Activated CD4-positive, alpha-beta T cell treated with anti-CD3 and anti-CD28 coated beads, Interleukin-2, amount 10 ng/mL, durations not matched to agents 24 days and 14 days (primary cell): ENCODE measurements at regions of chr5 and their contacts with region 1.

Region 1: GRCh38 chr5:79020861-79021561 is 35.9 kb upstream of the ARSB start:
- DNase-seq: peak; percentile 76
- H3K4me3 Mint-ChIP-seq: no peak overlapping the region
- H3K27ac Mint-ChIP-seq: no peak overlapping the region
- H3K4me1 Mint-ChIP-seq: peaks cover 11% of the 10 kb centered on the region
- H3K27me3 Mint-ChIP-seq: peaks cover 72% of the 10 kb centered on the region

Region 2: DNA sequence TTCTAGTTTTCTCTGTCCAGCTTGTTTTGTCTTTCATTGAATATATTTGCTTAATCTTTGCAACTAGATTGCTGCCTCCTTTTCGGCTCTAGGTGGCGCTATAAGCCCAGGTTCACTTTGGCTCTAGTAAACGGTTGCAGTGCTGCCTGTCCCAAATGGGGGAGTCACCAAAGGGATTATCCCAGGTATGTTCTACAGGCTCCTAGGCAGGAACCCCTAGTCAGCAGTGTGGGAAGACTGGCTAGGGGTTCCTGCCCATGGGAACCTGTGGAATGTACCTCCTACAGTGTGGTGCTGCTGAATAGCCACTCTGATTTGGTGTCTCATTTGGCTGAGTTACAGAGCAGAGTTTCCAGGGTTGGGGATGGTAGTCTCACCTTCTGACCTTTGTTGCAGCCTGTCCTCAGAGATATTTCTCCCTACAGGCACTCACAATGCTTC is 121.1 kb before region 1 on chr5:
- intact Hi-C with region 1: loop called (anchors 10 kb)
- DNase-seq: peak; percentile 78
- H3K4me3 Mint-ChIP-seq: no peak overlapping the region
- H3K27ac Mint-ChIP-seq: no peak overlapping the region
- H3K4me1 Mint-ChIP-seq: no peaks in the 10 kb centered on the region
- H3K27me3 Mint-ChIP-seq: no peaks in the 10 kb centered on the region

Region 3: GRCh38 chr5:79109527-79110492 is 88.8 kb after region 1 on chr5:
- intact Hi-C with region 1: loop called (anchors 2 kb)
- DNase-seq: peak; percentile 67
- H3K4me3 Mint-ChIP-seq: no peak overlapping the region
- H3K27ac Mint-ChIP-seq: no peak overlapping the region
- H3K4me1 Mint-ChIP-seq: peaks cover 3% of the 10 kb centered on the region
- H3K27me3 Mint-ChIP-seq: peaks cover 63% of the 10 kb centered on the region

Region 4: DNA sequence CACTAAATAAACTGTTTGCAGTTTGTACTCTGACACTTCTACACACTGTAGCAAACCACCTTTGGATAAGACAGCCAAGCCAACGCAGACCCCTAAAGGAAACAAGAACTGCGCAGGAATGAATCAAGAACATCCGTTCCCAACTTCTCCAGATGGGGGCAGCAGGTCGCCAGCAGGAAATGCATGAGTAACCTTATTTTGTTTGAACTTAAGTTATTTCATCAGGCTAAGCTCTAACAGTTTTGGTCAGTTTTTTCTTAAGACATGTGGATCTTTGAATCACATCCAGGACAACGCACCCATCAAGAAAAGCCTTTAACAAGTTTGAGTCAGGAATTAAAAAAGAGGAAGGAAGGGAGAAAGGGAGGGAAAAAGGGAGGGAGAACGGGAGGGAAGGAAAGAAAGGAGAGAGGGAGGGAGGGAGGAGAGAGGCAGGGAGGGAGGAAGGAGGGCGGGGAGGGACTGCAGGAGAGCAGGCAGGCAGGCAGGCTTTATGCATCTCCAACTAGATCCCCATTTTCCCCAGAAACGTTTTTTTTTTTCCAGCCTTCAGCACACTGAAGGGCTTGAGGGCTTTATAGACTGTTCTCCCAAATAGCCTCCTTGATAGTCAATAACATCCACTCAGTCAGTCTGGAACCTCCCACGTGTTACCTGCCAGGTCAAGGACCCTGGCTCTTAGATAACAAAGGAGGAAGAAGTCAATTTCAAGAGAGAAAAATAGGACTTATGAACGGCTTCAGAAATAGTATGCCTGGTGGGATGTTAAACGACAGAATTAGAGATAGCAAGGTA is 112.8 kb after region 1 on chr5:
- intact Hi-C with region 1: loop called (anchors 1 kb)
- DNase-seq: peak; percentile 88
- H3K4me3 Mint-ChIP-seq: peak overlapping the region; percentile 41
- H3K27ac Mint-ChIP-seq: peak overlapping the region; percentile 69
- H3K4me1 Mint-ChIP-seq: peaks cover 5% of the 10 kb centered on the region
- H3K27me3 Mint-ChIP-seq: peaks cover 1% of the 10 kb centered on the region

Region 5: GRCh38 chr5:79464695-79465332 is 443.8 kb after region 1 on chr5:
- intact Hi-C with region 1: loop called (anchors 5 kb)
- DNase-seq: no peak
- H3K4me3 Mint-ChIP-seq: no peak overlapping the region
- H3K27ac Mint-ChIP-seq: no peak overlapping the region
- H3K4me1 Mint-ChIP-seq: peaks cover 4% of the 10 kb centered on the region
- H3K27me3 Mint-ChIP-seq: peaks cover 7% of the 10 kb centered on the region